ENCODE measurements at regions of chr5 and their contacts with region 1.

Region 1: GRCh38 chr5:172688349-172689217 is 47.5 kb downstream of the NEURL1B start:
- DNase-seq: no peak
- H3K4me3 ChIP-seq: no peak overlapping the region
- H3K27ac ChIP-seq: peak overlapping the region; percentile 62 to 83 (median 76)
- H3K4me1 ChIP-seq: peaks cover 0 to 69% (median 65%) of the 10 kb centered on the region in 4 donors
- H3K27me3 ChIP-seq: no peaks in the 10 kb centered on the region
- CTCF ChIP-seq: no peak
- EP300 ChIP-seq: no peak
- POLR2A ChIP-seq: no peak

Region 2: GRCh38 chr5:172640822-172641358 is 47.7 kb before region 1 on chr5 and contains the start of gene NEURL1B:
- intact Hi-C with region 1: loop called (anchors 2 kb)
- DNase-seq: peak; percentile 93
- H3K4me3 ChIP-seq: peak within 1 kb of the TSS; percentile 79 to 99 (median 99)
- H3K27ac ChIP-seq: peak within 1 kb of the TSS; percentile 94 to 99 (median 96)
- H3K4me1 ChIP-seq: peaks cover 0 to 52% (median 43%) of the 10 kb centered on the region in 4 donors
- H3K27me3 ChIP-seq: no peaks in the 10 kb centered on the region
- CTCF ChIP-seq: no peak
- EP300 ChIP-seq: no peak
- POLR2A ChIP-seq: peak in 1 of 2 donors; percentile 24
- total RNA-seq, gene NEURL1B: 32.9 to 53.2 (median 45.6) TPM

Region 3: GRCh38 chr5:172816901-172817564 is 128.4 kb after region 1 on chr5:
- intact Hi-C with region 1: no loop called
- DNase-seq: no peak
- H3K4me3 ChIP-seq: no peak overlapping the region
- H3K27ac ChIP-seq: peak overlapping the region in 1 of 4 donors; percentile 29
- H3K4me1 ChIP-seq: peaks cover 0 to 6% (median 0%) of the 10 kb centered on the region in 4 donors
- H3K27me3 ChIP-seq: no peaks in the 10 kb centered on the region
- CTCF ChIP-seq: no peak
- EP300 ChIP-seq: no peak
- POLR2A ChIP-seq: no peak

Region 4: DNA sequence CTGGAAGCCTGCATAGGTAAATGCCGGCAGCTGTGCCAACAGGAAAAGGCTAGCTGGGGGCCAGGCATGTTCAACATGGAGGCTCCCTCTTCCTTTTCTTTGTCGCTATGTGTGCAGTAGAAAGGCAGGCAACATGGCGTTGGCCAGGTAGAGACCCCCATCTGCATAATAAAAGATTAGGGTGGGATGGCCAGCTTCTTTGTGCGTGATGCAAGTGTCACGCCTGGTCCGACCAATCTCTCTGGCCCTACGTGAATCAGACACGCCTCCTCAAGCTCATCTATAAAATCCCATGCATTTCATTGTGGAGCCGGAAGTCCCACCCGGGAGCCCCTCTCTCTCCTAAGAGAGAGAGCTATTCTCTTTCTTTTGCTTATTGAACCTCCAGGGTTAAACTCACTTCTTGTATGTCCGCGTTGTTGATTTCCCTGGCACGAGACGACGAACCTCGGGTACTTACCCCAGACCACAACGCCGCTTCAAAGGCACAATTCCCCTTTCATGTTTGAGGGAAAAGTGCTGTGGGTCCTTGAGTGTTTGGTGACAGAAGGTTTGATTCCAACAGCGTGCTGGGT is 1275.4 kb after region 1 on chr5:
- intact Hi-C with region 1: no loop called
- DNase-seq: no peak
- H3K4me3 ChIP-seq: peak overlapping the region in 3 of 4 donors; percentile 32 to 37 (median 34)
- H3K27ac ChIP-seq: peak overlapping the region; percentile 41 to 57 (median 50)
- H3K4me1 ChIP-seq: peaks cover 0 to 10% (median 4%) of the 10 kb centered on the region in 4 donors
- H3K27me3 ChIP-seq: no peaks in the 10 kb centered on the region
- CTCF ChIP-seq: no peak
- EP300 ChIP-seq: no peak
- POLR2A ChIP-seq: no peak

Measured in sigmoid colon (tissue), 7 donors.